ENCODE measurements at regions of chr11 and their contacts with region 1.

Region 1: GRCh38 chr11:67391304-67392132 is at the start of gene RAD9A:
- DNase-seq: peak; percentile 99
- H3K4me3 ChIP-seq: peak within 1 kb of the TSS; percentile 76 to 98
- H3K27ac ChIP-seq: peak within 1 kb of the TSS; percentile 80 to 82
- H3K4me1 ChIP-seq: peaks cover 0 to 13% of the 10 kb centered on the region in 2 experiments; a peak in 1 of 4 replicates
- H3K27me3 ChIP-seq: no peaks in the 10 kb centered on the region
- CTCF ChIP-seq: no peak
- EP300 ChIP-seq: peak in 1 of 2 experiments; percentile 8; a peak in 1 of 4 replicates
- RAD21 ChIP-seq: no peak
- polyA plus RNA-seq, gene RAD9A: 21.5 and 22.3 TPM in 2 replicates

Region 2: GRCh38 chr11:67411785-67412152 is 20.3 kb after region 1 on chr11:
- CTCF ChIA-PET with region 1: no interaction called
- POLR2A ChIA-PET with region 1: no interaction called
- DNase-seq: no peak
- H3K4me3 ChIP-seq: no peak overlapping the region
- H3K27ac ChIP-seq: no peak overlapping the region
- H3K4me1 ChIP-seq: peaks cover 2 to 3% of the 10 kb centered on the region in 2 experiments; a peak in 1 of 4 replicates
- H3K27me3 ChIP-seq: no peaks in the 10 kb centered on the region
- CTCF ChIP-seq: no peak
- EP300 ChIP-seq: no peak
- RAD21 ChIP-seq: no peak

Region 3: DNA sequence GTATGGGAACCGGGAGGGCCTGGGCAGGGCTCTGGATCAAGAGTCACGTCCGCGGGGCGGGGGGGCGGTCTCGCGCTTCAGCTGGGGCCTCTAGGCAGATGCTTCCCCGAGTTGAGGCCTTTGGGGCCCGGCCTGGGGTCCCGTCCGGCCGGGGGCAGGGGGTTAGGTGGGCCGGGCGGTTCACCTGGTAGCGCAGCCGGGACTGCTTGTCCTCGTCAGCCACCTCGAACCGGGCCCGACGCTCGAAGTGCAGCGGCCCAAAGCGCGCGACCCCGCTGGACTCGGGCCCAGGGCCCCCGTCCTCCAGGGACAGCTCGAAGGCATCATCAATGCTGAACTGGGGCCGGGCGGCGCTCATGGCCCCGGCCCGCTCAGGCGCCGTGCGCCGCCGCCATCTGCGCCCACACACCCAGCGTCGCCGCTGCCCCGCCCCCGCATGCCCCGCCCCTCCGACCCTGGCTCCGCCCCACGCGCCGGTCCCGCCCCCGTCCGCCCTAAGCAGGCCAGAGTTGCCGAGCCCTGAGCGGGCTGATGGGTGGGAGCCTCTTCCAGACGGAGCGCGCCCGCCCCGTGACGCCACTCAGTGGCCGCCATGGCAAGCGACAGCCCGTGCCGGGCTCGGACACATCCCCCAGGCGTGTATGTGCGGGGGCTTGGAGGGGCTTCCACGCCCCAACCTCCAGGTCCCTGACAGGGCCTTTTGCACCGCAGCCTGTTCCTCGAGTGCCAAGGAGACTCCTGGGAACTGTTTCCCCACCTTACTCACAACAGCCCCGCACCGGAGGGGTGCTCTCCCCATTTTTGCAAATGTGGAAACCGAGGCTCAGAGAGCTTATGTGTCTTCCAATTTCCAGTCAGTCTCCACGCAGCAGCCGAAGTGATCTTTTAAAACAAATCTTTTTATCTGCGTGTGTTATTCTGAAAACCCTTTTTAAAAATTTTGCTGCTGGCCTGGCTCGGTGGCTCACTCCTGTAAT is 77.6 kb after region 1 on chr11 and contains the start of gene TMEM134:
- CTCF ChIA-PET with region 1: interaction called, 11 read pairs
- POLR2A ChIA-PET with region 1: interaction called, 6 read pairs
- DNase-seq: peak; percentile 98
- H3K4me3 ChIP-seq: peak within 1 kb of the TSS; percentile 73 to 90
- H3K27ac ChIP-seq: peak within 1 kb of the TSS; percentile 66 to 72; a peak in 3 of 4 replicates
- H3K4me1 ChIP-seq: peaks cover 3 to 30% of the 10 kb centered on the region in 2 experiments; a peak in 2 of 4 replicates
- H3K27me3 ChIP-seq: no peaks in the 10 kb centered on the region
- CTCF ChIP-seq: peak; percentile 50
- EP300 ChIP-seq: no peak
- RAD21 ChIP-seq: peak; percentile 58
- polyA plus RNA-seq, gene TMEM134: 132 and 135 TPM in 2 replicates

Measured in SK-N-SH (cell line).